Posterior cingulate gyrus (tissue), 11 donors: ENCODE measurements at regions of chr13 and their contacts with region 1.

Region 1: DNA sequence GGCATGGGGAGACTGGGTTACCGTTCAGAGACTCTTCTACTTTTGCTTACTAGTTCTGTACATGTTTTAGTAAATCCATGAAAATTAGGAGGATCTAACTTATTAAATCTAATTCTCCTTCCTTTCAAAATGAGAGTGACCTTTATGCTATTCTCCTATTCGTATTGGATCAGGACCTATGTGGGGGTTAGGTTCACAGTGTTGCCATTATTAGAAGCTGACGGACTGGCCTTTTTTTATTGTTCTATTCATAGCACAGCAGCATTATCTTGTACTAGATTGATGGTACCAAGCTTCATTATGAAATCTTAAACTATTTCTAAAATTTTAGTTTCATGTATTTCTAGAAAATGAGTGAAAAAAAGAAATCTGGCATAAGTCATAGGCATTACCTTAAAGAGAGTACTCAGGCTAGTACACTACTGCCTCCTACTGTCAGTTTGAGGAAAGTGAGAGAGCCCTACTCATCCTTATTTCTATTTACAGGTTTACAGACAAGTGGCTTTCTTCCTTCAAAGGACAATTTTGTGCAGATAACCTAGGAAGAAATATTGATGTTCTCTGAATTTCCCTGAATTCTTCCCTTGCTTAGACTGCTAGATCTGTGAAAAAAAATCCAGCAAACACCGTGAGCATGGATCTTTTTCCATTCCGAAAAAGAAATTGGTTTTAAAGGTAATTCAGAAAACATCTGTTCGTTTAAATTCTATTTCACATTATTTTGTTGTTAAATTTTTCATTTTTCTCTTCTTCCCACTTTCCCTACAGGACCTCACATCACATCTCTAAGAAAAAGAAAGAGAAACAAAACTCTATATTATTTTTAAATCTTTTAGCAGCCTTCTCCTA is 485.5 kb downstream of the DIAPH3 start:
- DNase-seq: no peak

Region 2: DNA sequence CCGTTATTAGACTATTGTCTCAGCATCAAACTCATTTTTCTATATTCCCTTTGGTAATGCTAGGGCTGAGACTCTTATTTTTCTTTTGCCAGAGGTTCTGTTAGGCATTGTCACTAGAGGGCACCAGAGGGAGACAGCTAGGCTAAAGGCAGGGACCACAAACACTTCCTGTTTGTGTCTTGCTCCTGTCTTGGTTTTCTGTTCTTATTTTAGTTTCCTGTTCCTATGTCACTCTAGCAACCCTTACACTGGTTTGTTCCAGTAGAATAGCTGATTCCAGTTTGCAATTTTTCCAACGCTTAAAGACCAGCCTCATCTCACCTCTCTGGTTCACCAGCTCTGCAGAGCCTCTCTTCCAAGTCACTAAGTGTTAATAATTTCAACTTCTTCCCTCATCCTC is 286.5 kb before region 1 on chr13:
- intact Hi-C with region 1: loop called (anchors 5 kb)
- DNase-seq: peak in 2 of 10 donors; percentile 26 to 66

Region 3: GRCh38 chr13:59519819-59520218 is 158.4 kb before region 1 on chr13:
- intact Hi-C with region 1: no loop called
- DNase-seq: no peak

Region 4: GRCh38 chr13:59710991-59711701 is 33.0 kb after region 1 on chr13:
- intact Hi-C with region 1: no loop called
- DNase-seq: no peak

Region 5: GRCh38 chr13:59906413-59907049 is 228.3 kb after region 1 on chr13:
- intact Hi-C with region 1: loop called (anchors 10 kb)
- DNase-seq: no peak

Region 6: GRCh38 chr13:60331249-60332012 is 653.2 kb after region 1 on chr13:
- intact Hi-C with region 1: loop called (anchors 5 kb)
- DNase-seq: no peak

Region 7: DNA sequence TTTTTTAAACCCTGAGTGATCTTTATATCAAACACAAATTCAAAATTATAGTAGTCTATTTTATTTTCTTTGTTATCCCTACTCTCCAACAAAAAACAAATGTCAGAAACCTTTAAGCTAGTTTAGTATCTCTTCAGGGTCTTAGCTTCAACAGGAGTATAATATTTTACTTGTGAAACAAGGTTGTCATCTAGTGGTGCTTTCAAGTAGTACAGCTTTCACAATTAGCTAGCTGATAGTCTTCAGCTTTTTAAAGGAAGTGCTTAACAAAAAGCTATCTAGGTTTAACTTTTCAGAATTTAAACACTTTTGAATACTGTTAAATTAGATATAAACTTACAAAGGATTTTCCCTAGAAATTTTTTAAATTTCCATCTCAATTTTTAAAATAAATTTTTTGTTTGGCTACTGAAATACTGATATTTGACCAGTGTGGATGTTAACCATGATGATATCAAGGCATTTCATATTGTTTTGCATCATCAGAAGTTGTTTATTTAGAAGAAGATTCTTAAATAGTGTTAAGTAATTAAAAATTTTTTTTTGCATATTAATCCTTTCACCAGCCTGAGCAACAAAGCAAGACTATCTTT is 753.0 kb after region 1 on chr13:
- intact Hi-C with region 1: loop called (anchors 5 kb)
- DNase-seq: no peak

Region 8: GRCh38 chr13:60887711-60888110 is 1209.5 kb after region 1 on chr13:
- intact Hi-C with region 1: no loop called
- DNase-seq: no peak